ENCODE measurements at regions of chr2 and their contacts with region 1.

Region 1: DNA sequence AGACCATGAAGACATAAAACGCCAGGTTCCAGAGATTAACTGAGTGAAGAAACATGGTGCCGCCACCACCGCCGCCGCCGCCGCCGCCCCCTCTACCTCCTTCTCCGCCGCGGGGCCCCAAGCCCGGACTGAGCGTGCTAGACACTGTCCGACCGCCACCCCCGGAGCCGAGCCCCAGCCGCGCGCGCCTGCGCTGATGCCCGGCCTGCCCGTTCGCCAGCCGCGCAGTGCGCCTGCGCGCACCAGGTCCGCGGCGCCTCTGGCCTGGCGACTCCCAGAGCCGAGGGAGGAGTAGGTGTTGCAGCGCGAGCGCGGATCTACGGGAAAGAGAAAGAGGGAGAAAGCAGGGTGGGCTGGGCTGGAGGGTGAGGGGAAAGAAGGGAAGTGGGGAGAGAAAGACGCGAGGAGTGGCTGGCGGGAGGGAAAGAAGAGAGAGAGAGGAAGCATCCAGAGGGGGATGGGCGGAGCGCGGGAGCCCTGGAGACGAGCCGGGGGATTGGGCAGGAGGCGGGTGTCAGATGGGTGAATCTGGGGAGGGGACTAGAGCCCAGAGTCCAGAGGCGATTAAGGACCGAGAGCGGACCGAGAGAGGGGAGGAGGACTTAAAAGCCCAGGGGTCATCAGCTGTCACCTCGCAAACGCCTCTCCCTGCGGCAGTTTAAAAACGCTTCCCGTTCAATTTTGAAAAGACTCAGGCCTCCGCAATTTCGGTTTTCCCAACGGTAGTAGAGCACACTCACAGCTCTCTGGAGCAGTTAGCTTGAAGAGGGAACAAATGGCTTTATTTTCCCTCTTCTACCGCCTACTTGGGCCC is at the start of gene PGAP1:
- DNase-seq: peak; percentile 63
- H3K4me3 ChIP-seq: peak within 1 kb of the TSS; percentile 72
- H3K27ac ChIP-seq: peak within 1 kb of the TSS; percentile 76
- H3K27me3 ChIP-seq: no peaks in the 10 kb centered on the region
- CTCF ChIP-seq: no peak
- polyA plus RNA-seq, gene PGAP1: 4.7 and 6.4 TPM in 2 replicates

Region 2: GRCh38 chr2:196200557-196200956 is 726.2 kb before region 1 on chr2:
- CTCF ChIA-PET with region 1: no interaction called
- POLR2A ChIA-PET with region 1: no interaction called
- DNase-seq: no peak
- H3K4me3 ChIP-seq: no peak overlapping the region
- H3K27ac ChIP-seq: no peak overlapping the region
- H3K27me3 ChIP-seq: no peaks in the 10 kb centered on the region
- CTCF ChIP-seq: no peak

Region 3: DNA sequence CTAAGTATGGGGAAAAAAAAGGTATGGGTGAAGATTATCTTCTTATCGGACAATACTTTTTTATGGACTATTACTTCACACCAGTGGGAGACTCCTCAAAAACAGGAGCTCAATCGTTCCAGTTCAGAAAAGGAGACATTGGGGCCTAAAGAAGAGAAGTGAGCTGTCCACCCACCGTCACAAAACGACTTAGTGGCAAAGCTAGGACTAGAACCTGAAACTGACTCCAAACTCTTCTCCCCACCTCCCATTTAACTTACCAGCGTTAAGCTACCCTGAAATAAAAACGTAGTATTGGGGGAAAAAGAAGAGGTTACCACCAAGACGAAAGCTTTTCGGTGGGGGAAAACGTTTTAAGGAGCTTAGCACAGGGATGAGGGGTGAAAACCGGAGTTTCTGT is 127.8 kb before region 1 on chr2:
- CTCF ChIA-PET with region 1: no interaction called
- POLR2A ChIA-PET with region 1: interaction called, 14 read pairs
- DNase-seq: no peak
- H3K4me3 ChIP-seq: peak overlapping the region; percentile 85
- H3K27ac ChIP-seq: peak overlapping the region; percentile 75
- H3K27me3 ChIP-seq: no peaks in the 10 kb centered on the region
- CTCF ChIP-seq: no peak

Region 4: GRCh38 chr2:196885876-196886275 is 40.9 kb before region 1 on chr2:
- CTCF ChIA-PET with region 1: no interaction called
- POLR2A ChIA-PET with region 1: interaction called, 10 read pairs
- DNase-seq: no peak
- H3K4me3 ChIP-seq: no peak overlapping the region
- H3K27ac ChIP-seq: no peak overlapping the region
- H3K27me3 ChIP-seq: no peaks in the 10 kb centered on the region
- CTCF ChIP-seq: no peak